BJ (cell line): ENCODE measurements at regions of chr9 and their contacts with region 1.

Region 1: GRCh38 chr9:72623156-72623555 is 101.7 kb downstream of the TMC1 start:
- DNase-seq: no peak
- H3K4me3 ChIP-seq: no peak overlapping the region
- H3K27me3 ChIP-seq: no peaks in the 10 kb centered on the region
- CTCF ChIP-seq: no peak

Region 2: GRCh38 chr9:72871685-72872084 is 248.5 kb after region 1 on chr9:
- CTCF ChIA-PET with region 1: no interaction called
- POLR2A ChIA-PET with region 1: no interaction called
- DNase-seq: no peak
- H3K4me3 ChIP-seq: no peak overlapping the region
- H3K27me3 ChIP-seq: no peaks in the 10 kb centered on the region
- CTCF ChIP-seq: peak; percentile 44; the same call in 1 of the 2 replicates

Region 3: GRCh38 chr9:73011181-73011750 is 388.1 kb after region 1 on chr9:
- CTCF ChIA-PET with region 1: no interaction called
- POLR2A ChIA-PET with region 1: interaction called, 13 read pairs
- DNase-seq: peak; percentile 91
- H3K4me3 ChIP-seq: no peak overlapping the region
- H3K27me3 ChIP-seq: no peaks in the 10 kb centered on the region
- CTCF ChIP-seq: no peak